Caco-2 (cell line): ENCODE measurements at regions of chr14 and their contacts with region 1.

Region 1: GRCh38 chr14:61461808-61462275 is 140.5 kb downstream of the PRKCH start:
- DNase-seq: peak in 1 of 2 experiments; percentile 63
- H3K4me3 ChIP-seq: no peak overlapping the region
- H3K4me3 Mint-ChIP-seq: no peak overlapping the region
- H3K27ac Mint-ChIP-seq: no peak overlapping the region
- H3K4me1 ChIP-seq: no peaks in the 10 kb centered on the region
- H3K4me1 Mint-ChIP-seq: no peaks in the 10 kb centered on the region
- H3K27me3 ChIP-seq: no peaks in the 10 kb centered on the region
- H3K27me3 Mint-ChIP-seq: no peaks in the 10 kb centered on the region
- CTCF ChIP-seq: peak; percentile 50 to 68

Region 2: DNA sequence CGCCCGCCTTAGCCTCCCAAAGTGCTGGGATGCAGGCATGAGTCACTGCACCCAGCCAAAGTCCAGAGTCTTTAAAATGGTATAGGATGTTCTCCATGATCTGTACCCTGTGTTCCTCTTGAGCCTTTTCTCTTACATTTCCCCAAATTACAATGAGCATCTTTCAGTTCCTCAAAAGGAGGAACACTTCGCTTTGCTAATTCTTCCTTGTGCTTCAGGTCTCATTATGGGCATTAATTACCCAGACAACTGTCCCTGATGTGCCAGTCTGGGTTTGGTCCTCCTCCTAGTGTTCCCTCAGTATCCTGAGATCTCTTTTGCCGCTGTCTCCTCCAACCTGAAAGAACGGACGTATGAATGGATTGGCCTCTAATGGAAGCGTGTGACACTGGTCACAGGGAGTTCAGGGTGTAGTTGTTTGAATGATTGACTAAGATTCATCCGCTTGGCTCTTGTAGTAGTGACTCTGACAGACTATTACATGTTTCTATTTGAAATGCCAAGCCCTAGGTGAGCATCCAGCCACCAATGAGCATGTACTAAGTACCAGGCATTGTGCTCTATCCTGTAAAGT is 132.3 kb before region 1 on chr14:
- CTCF ChIA-PET with region 1: no interaction called
- POLR2A ChIA-PET with region 1: no interaction called
- intact Hi-C with region 1: no loop called
- DNase-seq: no peak
- H3K4me3 ChIP-seq: no peak overlapping the region
- H3K4me3 Mint-ChIP-seq: no peak overlapping the region
- H3K27ac Mint-ChIP-seq: no peak overlapping the region
- H3K4me1 ChIP-seq: no peaks in the 10 kb centered on the region
- H3K4me1 Mint-ChIP-seq: peaks cover 11% of the 10 kb centered on the region
- H3K27me3 ChIP-seq: no peaks in the 10 kb centered on the region
- H3K27me3 Mint-ChIP-seq: no peaks in the 10 kb centered on the region
- CTCF ChIP-seq: no peak

Region 3: GRCh38 chr14:61372842-61373555 is 88.8 kb before region 1 on chr14:
- CTCF ChIA-PET with region 1: no interaction called
- POLR2A ChIA-PET with region 1: no interaction called
- intact Hi-C with region 1: no loop called
- DNase-seq: no peak
- H3K4me3 ChIP-seq: no peak overlapping the region
- H3K4me3 Mint-ChIP-seq: no peak overlapping the region
- H3K27ac Mint-ChIP-seq: no peak overlapping the region
- H3K4me1 ChIP-seq: 0 out of 2 replicates have a peak, but pooled peaks cover 6% of the 10 kb centered on the region
- H3K4me1 Mint-ChIP-seq: peaks cover 5% of the 10 kb centered on the region
- H3K27me3 ChIP-seq: no peaks in the 10 kb centered on the region
- H3K27me3 Mint-ChIP-seq: no peaks in the 10 kb centered on the region
- CTCF ChIP-seq: no peak

Region 4: GRCh38 chr14:61537563-61538463 is 76.0 kb after region 1 on chr14:
- CTCF ChIA-PET with region 1: no interaction called
- POLR2A ChIA-PET with region 1: no interaction called
- intact Hi-C with region 1: no loop called
- DNase-seq: peak; percentile 90 to 93
- H3K4me3 ChIP-seq: no peak overlapping the region
- H3K4me3 Mint-ChIP-seq: peak overlapping the region; percentile 63
- H3K27ac Mint-ChIP-seq: peak overlapping the region; percentile 99
- H3K4me1 ChIP-seq: peaks cover 45% of the 10 kb centered on the region
- H3K4me1 Mint-ChIP-seq: peaks cover 42% of the 10 kb centered on the region
- H3K27me3 ChIP-seq: no peaks in the 10 kb centered on the region
- H3K27me3 Mint-ChIP-seq: no peaks in the 10 kb centered on the region
- CTCF ChIP-seq: no peak

Region 5: DNA sequence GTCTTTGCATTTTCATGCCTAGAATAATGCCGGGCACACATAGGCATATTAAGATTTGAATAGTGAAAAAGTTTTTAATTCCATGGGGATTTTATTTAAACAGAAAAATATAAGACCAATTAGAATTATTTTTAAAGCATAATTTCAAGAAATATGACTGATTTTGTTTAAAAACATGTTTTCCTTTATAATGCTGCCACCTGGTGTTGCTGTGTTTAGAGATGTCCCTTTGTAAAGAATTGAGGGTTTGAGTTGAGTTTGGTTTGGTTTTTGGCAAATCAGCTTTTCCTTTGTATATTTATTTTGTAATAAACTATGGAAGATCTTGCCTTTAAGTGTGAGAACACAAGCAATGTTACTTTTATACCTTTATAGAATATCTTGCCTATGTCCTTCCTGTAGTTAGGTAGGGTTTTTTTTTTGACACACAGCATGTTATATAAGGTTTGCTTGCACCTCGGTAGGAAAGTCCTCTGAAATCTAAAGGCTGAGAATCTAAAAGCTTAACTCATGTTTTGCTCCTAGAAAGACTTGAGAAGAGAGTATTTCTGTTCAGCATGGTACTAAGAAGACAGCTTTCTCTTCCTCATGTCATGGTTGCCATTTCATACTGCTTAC is 269.0 kb after region 1 on chr14:
- CTCF ChIA-PET with region 1: no interaction called
- POLR2A ChIA-PET with region 1: no interaction called
- intact Hi-C with region 1: loop called (anchors 1 kb)
- DNase-seq: no peak
- H3K4me3 ChIP-seq: no peak overlapping the region
- H3K4me3 Mint-ChIP-seq: no peak overlapping the region
- H3K27ac Mint-ChIP-seq: no peak overlapping the region
- H3K4me1 ChIP-seq: 0 out of 2 replicates have a peak, but pooled peaks cover 5% of the 10 kb centered on the region
- H3K4me1 Mint-ChIP-seq: peaks cover 6% of the 10 kb centered on the region
- H3K27me3 ChIP-seq: no peaks in the 10 kb centered on the region
- H3K27me3 Mint-ChIP-seq: no peaks in the 10 kb centered on the region
- CTCF ChIP-seq: no peak